ENCODE measurements at regions of chr18 and their contacts with region 1.

Region 1: GRCh38 chr18:74896390-74896991 is 298.8 kb downstream of the ZNF407 start:
- DNase-seq: peak; percentile 43 to 46
- H3K4me3 ChIP-seq: no peak overlapping the region
- H3K4me3 Mint-ChIP-seq: no peak overlapping the region
- H3K27ac Mint-ChIP-seq: no peak overlapping the region
- H3K4me1 ChIP-seq: no peaks in the 10 kb centered on the region
- H3K4me1 Mint-ChIP-seq: no peaks in the 10 kb centered on the region
- H3K27me3 ChIP-seq: no peaks in the 10 kb centered on the region
- H3K27me3 Mint-ChIP-seq: no peaks in the 10 kb centered on the region
- CTCF ChIP-seq: peak; percentile 43 to 58

Region 2: GRCh38 chr18:74963820-74964446 is 67.4 kb after region 1 on chr18:
- CTCF ChIA-PET with region 1: no interaction called
- POLR2A ChIA-PET with region 1: no interaction called
- intact Hi-C with region 1: loop called (anchors 5 kb)
- DNase-seq: peak; percentile 17 to 26
- H3K4me3 ChIP-seq: no peak overlapping the region
- H3K4me3 Mint-ChIP-seq: no peak overlapping the region
- H3K27ac Mint-ChIP-seq: no peak overlapping the region
- H3K4me1 ChIP-seq: no peaks in the 10 kb centered on the region
- H3K4me1 Mint-ChIP-seq: no peaks in the 10 kb centered on the region
- H3K27me3 ChIP-seq: no peaks in the 10 kb centered on the region
- H3K27me3 Mint-ChIP-seq: no peaks in the 10 kb centered on the region
- CTCF ChIP-seq: peak in 1 of 2 experiments; percentile 9

Measured in Caco-2 (cell line).